ENCODE measurements at regions of chr7 and their contacts with region 1.

Region 1: GRCh38 chr7:45890902-45891461 is 2.7 kb downstream of the IGFBP1 start:
- DNase-seq: peak; percentile 78
- ATAC-seq: no peak
- H3K4me3 ChIP-seq: no peak overlapping the region
- H3K27ac ChIP-seq: no peak overlapping the region
- H3K4me1 ChIP-seq: peaks cover 26% of the 10 kb centered on the region
- H3K27me3 ChIP-seq: no peaks in the 10 kb centered on the region
- CTCF ChIP-seq: peak; percentile 82

Region 2: DNA sequence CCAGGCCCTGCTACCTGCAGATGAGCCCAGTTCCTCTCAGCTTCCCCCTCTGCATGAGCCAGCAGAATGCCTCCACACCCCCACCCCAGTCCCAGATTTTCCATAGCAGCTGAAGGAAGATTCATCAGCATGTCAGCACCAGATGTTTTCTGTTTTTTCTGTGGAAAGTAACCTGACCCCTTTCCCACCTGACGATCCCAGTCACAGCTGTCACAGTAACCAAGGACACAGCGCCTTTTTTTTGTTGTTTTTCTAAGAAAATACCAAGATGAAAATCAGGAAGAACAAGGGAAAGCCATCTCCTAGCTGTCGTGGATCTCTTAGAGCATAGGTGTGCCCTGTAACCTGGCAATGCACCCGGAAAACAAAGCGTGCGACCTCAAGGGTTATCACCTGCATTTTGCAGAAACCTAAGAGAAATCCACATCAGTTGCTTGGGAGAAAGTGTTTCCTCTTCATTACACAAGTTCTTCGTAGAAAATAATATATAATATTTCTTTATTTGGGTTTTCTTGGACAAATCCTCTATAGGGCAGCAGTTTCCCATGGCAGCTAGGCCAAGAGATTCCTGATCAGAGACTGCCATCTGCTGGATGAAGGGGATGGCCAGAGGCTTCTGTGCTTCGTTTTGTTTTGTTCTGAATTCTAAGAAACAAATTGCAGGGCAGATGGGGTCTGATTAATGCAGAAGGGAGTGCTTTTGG is 1289.0 kb after region 1 on chr7:
- CTCF ChIA-PET with region 1: no interaction called
- POLR2A ChIA-PET with region 1: no interaction called
- intact Hi-C with region 1: loop called (anchors 1 kb)
- DNase-seq: peak; percentile 73
- ATAC-seq: peak; percentile 97
- H3K4me3 ChIP-seq: no peak overlapping the region
- H3K27ac ChIP-seq: no peak overlapping the region
- H3K4me1 ChIP-seq: no peaks in the 10 kb centered on the region
- H3K27me3 ChIP-seq: 0 out of 2 replicates have a peak, but pooled peaks cover 5% of the 10 kb centered on the region
- CTCF ChIP-seq: peak; percentile 85

Region 3: GRCh38 chr7:47254081-47255006 is 1363.4 kb after region 1 on chr7:
- CTCF ChIA-PET with region 1: no interaction called
- POLR2A ChIA-PET with region 1: no interaction called
- intact Hi-C with region 1: loop called (anchors 2 kb)
- DNase-seq: peak; percentile 63
- ATAC-seq: peak; percentile 75
- H3K4me3 ChIP-seq: peak overlapping the region; percentile 79
- H3K27ac ChIP-seq: no peak overlapping the region; the same call in 1 of the 2 replicates
- H3K4me1 ChIP-seq: peaks cover 13% of the 10 kb centered on the region
- H3K27me3 ChIP-seq: no peaks in the 10 kb centered on the region
- CTCF ChIP-seq: peak; percentile 89

Measured in PC-3 (cell line).